K562 (cell line): ENCODE measurements at regions of chr7 and their contacts with region 1.

Region 1: DNA sequence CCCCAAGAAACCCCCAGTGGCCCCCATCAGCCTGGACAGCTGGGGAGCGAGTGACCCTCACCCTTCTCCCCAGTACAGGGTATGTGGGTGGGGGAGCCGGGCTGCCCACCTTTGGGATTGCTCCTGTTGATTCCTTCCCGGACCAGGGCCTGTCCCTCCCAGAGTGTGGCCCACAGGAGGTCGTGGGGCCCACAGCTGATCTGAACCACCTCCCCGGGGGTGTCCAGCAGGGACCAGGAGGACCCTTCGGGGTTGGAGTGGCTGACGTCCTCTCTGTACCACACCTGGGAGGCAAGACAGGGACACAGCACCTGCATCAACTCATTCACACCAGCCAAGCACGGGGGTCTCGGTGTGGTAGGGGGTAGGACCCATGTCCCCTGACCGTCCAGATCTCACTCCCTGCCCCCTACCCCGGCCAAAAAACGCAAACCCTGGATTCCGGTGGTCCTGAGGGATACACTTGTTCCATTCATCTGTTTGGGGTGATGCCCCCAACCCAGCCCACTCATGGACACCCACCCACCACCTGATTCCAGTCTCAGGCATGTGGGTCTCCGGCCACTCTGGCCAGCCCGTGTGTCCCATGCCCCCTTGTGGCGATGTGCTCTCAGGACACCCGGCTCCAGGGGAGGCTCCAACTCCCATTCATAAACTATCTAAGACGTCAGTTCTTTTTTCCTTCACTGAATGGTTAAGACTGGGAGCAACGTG is 10.9 kb downstream of the TECPR1 start:
- DNase-seq: peak; percentile 57 to 74 (median 67)
- ATAC-seq: peak; percentile 94
- H3K4me3 ChIP-seq: no peak overlapping the region
- H3K27ac ChIP-seq: no peak overlapping the region
- H3K4me1 ChIP-seq: peaks cover 0 to 18% of the 10 kb centered on the region in 2 experiments; a peak in 2 of 5 replicates
- H3K27me3 ChIP-seq: peaks cover 0 to 7% of the 10 kb centered on the region in 2 experiments; a peak in 1 of 5 replicates
- CTCF ChIP-seq: peak; percentile 71 to 83 (median 75)
- EP300 ChIP-seq: no peak
- POLR2A ChIP-seq: no peak
- RAD21 ChIP-seq: peak; percentile 16 to 55; a peak in 2 of 4 replicates

Region 2: GRCh38 chr7:98280791-98281756 is 40.0 kb after region 1 on chr7 and contains the start of gene BRI3:
- CTCF ChIA-PET with region 1: no interaction called
- POLR2A ChIA-PET with region 1: interaction called, 8 read pairs
- in situ Hi-C with region 1: loop called (anchors 5 kb)
- intact Hi-C with region 1: no loop called
- DNase-seq: peak; percentile 86 to 93 (median 91)
- ATAC-seq: peak; percentile 82
- H3K4me3 ChIP-seq: peak within 1 kb of the TSS; percentile 68
- H3K27ac ChIP-seq: peak within 1 kb of the TSS; percentile 68
- H3K4me1 ChIP-seq: peaks cover 11 to 49% of the 10 kb centered on the region in 2 experiments; a peak in 4 of 5 replicates
- H3K27me3 ChIP-seq: peaks cover 0 to 18% of the 10 kb centered on the region in 2 experiments; a peak in 2 of 5 replicates
- CTCF ChIP-seq: no peak
- EP300 ChIP-seq: no peak
- POLR2A ChIP-seq: 0 out of 2 replicates have a peak, but pooled peaks have one; percentile 46
- RAD21 ChIP-seq: no peak
- polyA plus RNA-seq, gene BRI3: 4.3 to 5.7 TPM